ENCODE measurements at regions of chr10 and their contacts with region 1.

Region 1: DNA sequence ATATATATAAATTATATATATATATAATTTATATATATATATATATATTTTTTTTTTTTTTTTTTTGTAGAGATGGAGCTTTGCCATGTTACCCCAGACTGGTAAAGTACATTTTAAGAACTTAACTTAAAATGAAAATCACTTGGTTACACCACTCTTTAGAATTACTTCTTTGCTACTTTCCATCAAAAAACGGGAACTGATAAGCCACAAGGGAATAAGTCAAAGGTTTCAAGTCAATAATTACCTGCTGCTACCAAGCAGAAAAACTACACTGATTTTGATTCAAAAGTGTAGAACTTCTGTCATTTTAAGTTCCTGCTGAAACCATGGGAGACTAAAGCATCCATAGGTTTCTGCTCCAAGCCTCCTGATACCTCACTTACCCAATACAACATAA is 12.2 kb downstream of the PPA1 start:
- DNase-seq: no peak
- CTCF ChIP-seq: no peak

Region 2: DNA sequence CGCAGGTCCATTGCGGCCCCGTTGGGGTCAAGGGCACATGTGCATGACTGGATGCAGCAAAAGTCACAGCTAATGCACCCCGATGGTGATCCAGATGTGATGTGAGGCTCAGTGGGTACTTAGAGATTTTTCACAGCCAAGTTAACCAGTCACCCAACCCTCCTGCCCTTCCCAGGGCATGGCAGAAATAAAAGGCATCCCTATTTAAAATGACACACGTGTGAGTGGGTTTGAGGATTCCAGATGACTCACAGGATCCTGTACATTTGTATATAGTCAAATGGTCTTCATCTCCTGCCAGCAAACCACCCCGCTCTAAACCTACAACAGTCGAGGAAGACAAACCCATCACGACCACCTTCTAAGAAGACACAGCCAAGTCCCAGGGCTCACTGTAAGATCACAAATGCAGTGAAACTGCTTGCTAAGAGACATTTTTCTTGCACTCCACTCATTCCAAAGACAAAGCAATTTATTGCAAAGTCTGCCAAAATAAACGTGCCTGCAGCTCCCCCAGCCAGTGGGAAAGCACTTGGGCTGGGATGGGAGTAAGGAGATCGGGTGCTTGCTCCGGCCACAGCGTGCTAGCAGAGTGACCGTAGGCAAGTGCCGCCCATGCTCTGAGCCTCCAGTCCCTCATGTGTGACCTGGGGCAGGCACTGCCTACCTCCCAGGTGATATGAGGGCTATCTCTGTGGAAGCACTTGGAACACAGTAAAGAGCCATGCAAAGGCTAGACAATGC is 254.9 kb before region 1 on chr10:
- CTCF ChIA-PET with region 1: no interaction called
- POLR2A ChIA-PET with region 1: no interaction called
- DNase-seq: no peak
- CTCF ChIP-seq: no peak

Region 3: GRCh38 chr10:70084189-70084588 is 136.8 kb before region 1 on chr10:
- CTCF ChIA-PET with region 1: no interaction called
- POLR2A ChIA-PET with region 1: no interaction called
- DNase-seq: no peak
- CTCF ChIP-seq: no peak

Region 4: GRCh38 chr10:70125918-70126552 is 95.0 kb before region 1 on chr10:
- CTCF ChIA-PET with region 1: no interaction called
- POLR2A ChIA-PET with region 1: no interaction called
- DNase-seq: no peak
- CTCF ChIP-seq: no peak

Region 5: GRCh38 chr10:70146489-70147258 is 74.4 kb before region 1 on chr10 and contains the start of gene TYSND1:
- CTCF ChIA-PET with region 1: interaction called, 14 read pairs
- POLR2A ChIA-PET with region 1: no interaction called
- DNase-seq: peak; percentile 97
- CTCF ChIP-seq: peak; percentile 85

Region 6: GRCh38 chr10:70233109-70233938 is 12.3 kb after region 1 on chr10 and contains the start of gene PPA1:
- CTCF ChIA-PET with region 1: interaction called, 83 read pairs
- POLR2A ChIA-PET with region 1: no interaction called
- DNase-seq: peak; percentile 100
- CTCF ChIP-seq: no peak

Region 7: DNA sequence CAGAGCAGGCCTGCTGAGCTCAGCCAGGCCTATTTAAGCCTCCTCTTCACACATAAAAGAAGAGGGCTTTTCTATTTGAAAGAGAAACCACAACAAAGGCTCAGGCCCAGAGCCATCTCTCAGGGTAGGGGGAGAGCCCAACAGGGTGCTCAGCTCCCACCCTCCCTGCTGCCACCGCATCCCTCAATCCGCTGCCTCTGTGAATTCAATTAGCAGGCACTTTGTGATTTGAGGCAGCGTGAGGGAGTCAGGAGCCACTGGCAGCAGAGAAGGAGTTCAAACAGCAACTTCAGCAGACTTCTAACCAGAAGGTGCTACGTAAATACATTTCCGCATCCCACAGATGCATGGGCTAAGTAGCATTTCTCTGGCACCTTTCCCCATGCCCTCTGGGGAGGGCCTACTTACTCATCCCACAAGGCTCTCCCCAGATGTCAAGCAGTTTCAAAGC is 116.2 kb after region 1 on chr10:
- CTCF ChIA-PET with region 1: interaction called, 16 read pairs
- POLR2A ChIA-PET with region 1: no interaction called
- DNase-seq: no peak
- CTCF ChIP-seq: no peak

Region 8: GRCh38 chr10:70376436-70377378 is 155.7 kb after region 1 on chr10:
- CTCF ChIA-PET with region 1: interaction called, 31 read pairs
- POLR2A ChIA-PET with region 1: no interaction called
- DNase-seq: no peak
- CTCF ChIP-seq: no peak

Region 9: DNA sequence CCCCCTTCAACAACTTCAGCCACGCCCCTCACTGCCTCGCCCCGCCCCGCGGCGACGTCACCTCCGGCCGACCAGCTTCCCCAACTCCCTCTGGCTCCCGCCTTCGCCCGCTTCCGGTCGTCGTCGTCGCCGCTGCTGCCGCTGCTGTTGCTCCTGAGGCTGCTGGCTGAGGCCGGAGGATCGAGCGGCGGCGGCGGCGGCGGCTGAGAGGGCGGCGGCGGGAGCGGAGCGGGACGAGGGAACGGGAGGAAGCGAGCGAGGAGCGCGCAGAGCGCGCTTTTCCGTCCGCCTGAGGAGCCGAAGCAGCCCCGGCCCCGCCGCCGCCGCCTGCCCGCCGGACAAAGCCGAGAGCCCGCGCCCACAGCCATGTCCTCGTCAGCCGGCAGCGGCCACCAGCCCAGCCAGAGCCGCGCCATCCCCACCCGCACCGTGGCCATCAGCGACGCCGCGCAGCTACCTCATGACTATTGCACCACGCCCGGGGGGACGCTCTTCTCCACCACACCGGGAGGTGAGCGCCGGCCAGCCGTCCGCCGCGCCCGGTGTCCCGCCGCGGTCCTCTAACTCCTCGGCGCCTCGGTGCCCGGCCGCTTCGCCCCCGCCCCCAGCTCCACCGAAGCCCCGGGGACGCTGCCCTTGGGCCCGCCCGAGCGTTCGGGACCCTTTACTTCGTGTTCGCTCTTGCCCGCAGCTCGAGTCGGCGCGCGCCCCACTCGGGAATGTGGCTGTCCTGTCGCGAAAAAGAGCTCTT is 183.2 kb after region 1 on chr10 and contains the start of gene EIF4EBP2:
- CTCF ChIA-PET with region 1: interaction called, 26 read pairs
- POLR2A ChIA-PET with region 1: no interaction called
- DNase-seq: peak; percentile 95
- CTCF ChIP-seq: no peak